Activated CD4-positive, alpha-beta T cell treated with anti-CD3 and anti-CD28 coated beads, Interleukin-2, amount 10 ng/mL, durations not matched to agents 24 days and 14 days (primary cell): ENCODE measurements at regions of chr3 and their contacts with region 1.

Region 1: DNA sequence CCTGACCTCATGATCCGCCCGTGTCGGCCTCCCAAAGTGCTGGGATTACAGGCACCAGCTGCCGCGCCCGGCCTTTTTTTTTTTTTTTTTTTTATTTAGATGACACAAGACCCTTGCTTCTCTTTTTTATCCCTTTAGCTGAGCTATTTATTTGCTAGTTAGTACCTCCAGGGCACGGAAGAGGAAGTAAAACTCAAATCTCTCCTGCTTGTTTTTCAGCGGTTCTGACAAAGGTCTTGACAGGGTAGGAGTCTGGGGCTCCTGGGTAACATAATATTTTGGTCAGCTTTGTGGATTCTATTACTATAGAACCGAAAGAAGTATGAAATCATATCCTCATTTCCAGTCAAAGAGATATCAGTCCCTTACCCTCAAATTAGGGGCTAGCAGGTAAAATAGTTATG is 44.0 kb upstream of the ETV5 start:
- DNase-seq: no peak
- H3K4me3 Mint-ChIP-seq: no peak overlapping the region
- H3K27ac Mint-ChIP-seq: no peak overlapping the region
- H3K4me1 Mint-ChIP-seq: peaks cover 15% of the 10 kb centered on the region
- H3K27me3 Mint-ChIP-seq: peaks cover 40% of the 10 kb centered on the region

Region 2: GRCh38 chr3:185937689-185938463 is 215.0 kb before region 1 on chr3 and contains the start of gene TRA2B:
- intact Hi-C with region 1: loop called (anchors 5 kb)
- DNase-seq: peak; percentile 100
- H3K4me3 Mint-ChIP-seq: peak within 1 kb of the TSS; percentile 98
- H3K27ac Mint-ChIP-seq: peak within 1 kb of the TSS; percentile 100
- H3K4me1 Mint-ChIP-seq: peaks cover 33% of the 10 kb centered on the region
- H3K27me3 Mint-ChIP-seq: peaks cover 4% of the 10 kb centered on the region
- total RNA-seq, gene TRA2B: 311 and 314 TPM in 2 replicates